ENCODE measurements at regions of chr3 and their contacts with region 1.

Region 1: GRCh38 chr3:173078525-173078924 is 62.5 kb downstream of the SPATA16 start:
- DNase-seq: no peak
- H3K4me3 ChIP-seq: no peak overlapping the region
- H3K27ac ChIP-seq: no peak overlapping the region
- H3K4me1 ChIP-seq: peaks cover 6% of the 10 kb centered on the region
- H3K27me3 ChIP-seq: no peaks in the 10 kb centered on the region
- CTCF ChIP-seq: no peak

Region 2: GRCh38 chr3:172832983-172833382 is 245.5 kb before region 1 on chr3:
- CTCF ChIA-PET with region 1: no interaction called
- POLR2A ChIA-PET with region 1: no interaction called
- intact Hi-C with region 1: no loop called
- DNase-seq: no peak
- H3K4me3 ChIP-seq: no peak overlapping the region
- H3K27ac ChIP-seq: no peak overlapping the region
- H3K4me1 ChIP-seq: no peaks in the 10 kb centered on the region
- H3K27me3 ChIP-seq: no peaks in the 10 kb centered on the region
- CTCF ChIP-seq: no peak

Region 3: GRCh38 chr3:173538410-173538809 is 459.9 kb after region 1 on chr3:
- CTCF ChIA-PET with region 1: no interaction called
- POLR2A ChIA-PET with region 1: no interaction called
- intact Hi-C with region 1: loop called (anchors 5 kb)
- DNase-seq: no peak
- H3K4me3 ChIP-seq: no peak overlapping the region
- H3K27ac ChIP-seq: no peak overlapping the region
- H3K4me1 ChIP-seq: no peaks in the 10 kb centered on the region
- H3K27me3 ChIP-seq: no peaks in the 10 kb centered on the region
- CTCF ChIP-seq: peak; percentile 13; the same call in 1 of the 2 replicates

Measured in A673 (cell line).